ENCODE measurements at regions of chr2 and their contacts with region 1.

Region 1: GRCh38 chr2:128736689-128737545 is 418.2 kb upstream of the HS6ST1 start:
- DNase-seq: peak; percentile 64 to 65
- ATAC-seq: peak; percentile 72 to 90 (median 88)
- H3K4me3 ChIP-seq: no peak overlapping the region
- H3K4me3 Mint-ChIP-seq: peak overlapping the region; percentile 81
- H3K27ac ChIP-seq: no peak overlapping the region
- H3K27ac Mint-ChIP-seq: no peak overlapping the region
- H3K4me1 ChIP-seq: peaks cover 26% of the 10 kb centered on the region
- H3K4me1 Mint-ChIP-seq: peaks cover 0 to 21% of the 10 kb centered on the region in 2 donors
- H3K27me3 ChIP-seq: no peaks in the 10 kb centered on the region
- H3K27me3 Mint-ChIP-seq: peaks cover 8 to 15% of the 10 kb centered on the region in 2 donors
- CTCF ChIP-seq: peak; percentile 90

Region 2: DNA sequence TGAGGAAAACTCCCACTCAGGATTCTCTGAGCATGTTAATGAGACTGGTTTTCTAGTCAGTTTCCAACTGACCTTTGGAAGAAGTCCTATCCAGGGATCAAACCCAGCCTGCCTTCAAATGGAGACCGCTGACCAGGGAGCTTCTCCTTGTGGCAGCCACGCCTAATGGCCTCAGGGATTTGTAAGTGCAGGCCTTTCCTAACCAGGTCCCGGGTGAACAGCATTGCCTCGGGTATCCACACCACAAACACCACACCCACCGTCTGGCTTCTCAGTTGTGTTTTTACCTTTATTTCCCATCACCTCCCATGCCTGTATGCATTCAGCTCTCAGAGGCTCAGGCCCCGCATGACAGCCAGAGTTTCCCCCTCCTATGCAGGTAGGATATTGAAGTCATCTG is 12.0 kb before region 1 on chr2:
- intact Hi-C with region 1: loop called (anchors 2 kb)
- DNase-seq: no peak
- ATAC-seq: no peak
- H3K4me3 ChIP-seq: no peak overlapping the region
- H3K4me3 Mint-ChIP-seq: no peak overlapping the region
- H3K27ac ChIP-seq: no peak overlapping the region
- H3K27ac Mint-ChIP-seq: no peak overlapping the region
- H3K4me1 ChIP-seq: peaks cover 3% of the 10 kb centered on the region
- H3K4me1 Mint-ChIP-seq: peaks cover 14 to 23% of the 10 kb centered on the region in 2 donors
- H3K27me3 ChIP-seq: no peaks in the 10 kb centered on the region
- H3K27me3 Mint-ChIP-seq: no peaks in the 10 kb centered on the region
- CTCF ChIP-seq: no peak

Region 3: DNA sequence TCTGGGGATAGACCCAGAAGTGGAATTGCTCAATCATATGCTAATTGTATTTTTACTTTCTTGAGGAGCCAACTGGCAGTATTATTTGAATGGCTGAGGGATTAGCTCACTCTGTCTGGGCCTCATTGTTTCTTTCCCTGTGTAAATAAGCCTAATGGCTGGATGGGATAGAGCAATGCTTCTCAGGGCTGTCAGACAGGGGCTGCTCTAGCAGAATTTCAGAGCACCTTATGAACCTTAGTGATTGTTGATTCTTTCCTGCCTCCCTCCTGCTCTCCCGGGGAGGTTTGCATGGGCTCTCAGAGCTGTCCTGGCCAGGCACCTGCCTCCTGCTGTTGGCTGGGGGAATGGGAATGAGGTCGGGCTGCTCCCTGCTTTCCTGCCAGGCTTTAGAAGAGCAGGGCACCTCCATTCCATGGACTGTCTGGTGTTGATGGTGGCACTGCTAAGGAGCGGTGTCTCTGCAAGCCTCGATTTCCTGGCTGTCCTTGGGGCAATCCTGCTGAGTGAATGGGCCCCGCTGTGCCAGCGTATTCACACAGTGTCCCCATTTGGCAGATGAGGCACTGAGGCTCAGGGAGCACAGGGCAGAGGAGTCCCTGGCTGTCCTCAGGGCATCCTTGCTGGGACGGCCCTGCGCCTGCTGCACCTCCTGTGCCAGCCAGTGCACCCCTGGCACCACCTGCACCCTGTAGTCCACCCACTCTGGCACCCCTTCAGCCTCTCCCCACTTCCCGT is 50.0 kb after region 1 on chr2:
- intact Hi-C with region 1: no loop called
- DNase-seq: no peak
- ATAC-seq: no peak
- H3K4me3 ChIP-seq: no peak overlapping the region
- H3K4me3 Mint-ChIP-seq: no peak overlapping the region
- H3K27ac ChIP-seq: no peak overlapping the region
- H3K27ac Mint-ChIP-seq: no peak overlapping the region
- H3K4me1 ChIP-seq: no peaks in the 10 kb centered on the region
- H3K4me1 Mint-ChIP-seq: no peaks in the 10 kb centered on the region
- H3K27me3 ChIP-seq: no peaks in the 10 kb centered on the region
- H3K27me3 Mint-ChIP-seq: no peaks in the 10 kb centered on the region
- CTCF ChIP-seq: no peak

Region 4: GRCh38 chr2:129849559-129850160 is 1112.7 kb after region 1 on chr2:
- intact Hi-C with region 1: loop called (anchors 10 kb)
- DNase-seq: peak in 1 of 2 donors; percentile 83
- ATAC-seq: peak; percentile 90 to 99 (median 95)
- H3K4me3 ChIP-seq: no peak overlapping the region
- H3K4me3 Mint-ChIP-seq: no peak overlapping the region
- H3K27ac ChIP-seq: no peak overlapping the region
- H3K27ac Mint-ChIP-seq: no peak overlapping the region
- H3K4me1 ChIP-seq: no peaks in the 10 kb centered on the region
- H3K4me1 Mint-ChIP-seq: peaks cover 5% of the 10 kb centered on the region in 2 donors
- H3K27me3 ChIP-seq: no peaks in the 10 kb centered on the region
- H3K27me3 Mint-ChIP-seq: peaks cover 20 to 47% of the 10 kb centered on the region in 2 donors
- CTCF ChIP-seq: peak; percentile 79

Region 5: DNA sequence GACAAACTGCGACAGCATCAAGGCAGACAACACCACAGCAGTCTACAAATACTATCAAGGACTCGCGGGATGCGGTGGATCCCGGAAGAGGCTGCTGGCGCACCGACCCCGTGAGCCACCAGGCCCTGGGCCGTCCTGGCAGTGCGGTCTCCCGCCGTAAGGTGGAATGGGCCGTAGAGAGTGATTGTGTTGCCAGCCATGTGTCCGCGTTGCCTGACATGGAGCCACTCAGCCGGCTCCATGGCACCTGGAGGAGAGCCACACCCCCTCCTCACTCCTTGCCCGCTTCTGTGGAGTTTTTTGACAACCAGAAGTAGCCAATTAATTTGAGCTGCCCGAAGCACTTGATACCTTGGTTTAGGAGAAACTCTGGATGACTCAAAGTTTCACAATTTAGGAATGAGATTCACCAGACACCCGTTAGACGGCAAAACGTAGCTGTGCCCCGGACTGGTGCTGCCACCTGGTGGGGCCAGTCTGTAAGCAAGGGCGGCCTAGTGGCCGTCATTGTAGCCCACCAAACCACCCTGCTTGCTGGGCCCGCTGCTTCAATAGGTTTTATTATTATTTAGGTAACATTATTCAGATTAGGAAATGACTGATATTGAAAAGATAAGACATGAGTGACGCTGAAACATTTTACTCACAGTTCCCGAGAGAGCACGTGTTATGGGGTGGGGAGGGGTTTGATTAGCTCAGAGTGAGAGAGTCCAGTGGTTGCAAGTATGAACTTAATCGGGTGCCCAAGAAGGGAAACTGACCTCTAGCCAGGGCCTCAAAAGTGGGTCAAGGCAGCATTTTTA is 1595.6 kb after region 1 on chr2:
- intact Hi-C with region 1: loop called (anchors 10 kb)
- DNase-seq: peak; percentile 64 to 80
- ATAC-seq: peak; percentile 91 to 99 (median 97)
- H3K4me3 ChIP-seq: no peak overlapping the region
- H3K4me3 Mint-ChIP-seq: no peak overlapping the region
- H3K27ac ChIP-seq: no peak overlapping the region
- H3K27ac Mint-ChIP-seq: no peak overlapping the region
- H3K4me1 ChIP-seq: peaks cover 4% of the 10 kb centered on the region
- H3K4me1 Mint-ChIP-seq: peaks cover 4 to 6% of the 10 kb centered on the region in 2 donors
- H3K27me3 ChIP-seq: peaks cover 8% of the 10 kb centered on the region
- H3K27me3 Mint-ChIP-seq: peaks cover 30 to 46% of the 10 kb centered on the region in 2 donors
- CTCF ChIP-seq: peak; percentile 93

Measured in natural killer cell (primary cell).